Mammary epithelial cell (primary cell): ENCODE measurements at regions of chr10 and their contacts with region 1.

Region 1: DNA sequence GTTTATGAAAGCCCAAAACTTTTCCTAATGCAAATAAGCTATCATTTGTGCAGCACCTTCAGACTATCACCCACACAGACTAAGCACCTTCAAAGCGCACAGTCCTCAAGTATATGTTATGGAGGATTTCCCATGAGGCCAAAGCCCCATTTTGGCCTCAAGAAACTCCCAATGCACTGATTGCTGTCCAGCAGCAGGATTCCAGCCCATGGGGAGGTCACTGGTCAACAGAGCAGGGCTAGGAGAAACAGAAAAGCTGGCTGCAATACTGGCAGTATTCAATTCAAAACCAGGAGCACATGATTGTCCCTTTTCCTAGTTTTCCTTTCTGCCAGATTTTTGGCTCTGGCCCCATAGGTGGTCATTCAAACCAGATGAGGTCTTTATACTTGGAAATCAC is 24.5 kb upstream of the KIAA1217 start:
- DNase-seq: no peak
- H3K4me3 ChIP-seq: no peak overlapping the region
- H3K27ac ChIP-seq: no peak overlapping the region
- H3K4me1 ChIP-seq: no peaks in the 10 kb centered on the region
- H3K27me3 ChIP-seq: peaks cover 5% of the 10 kb centered on the region
- CTCF ChIP-seq: no peak

Region 2: DNA sequence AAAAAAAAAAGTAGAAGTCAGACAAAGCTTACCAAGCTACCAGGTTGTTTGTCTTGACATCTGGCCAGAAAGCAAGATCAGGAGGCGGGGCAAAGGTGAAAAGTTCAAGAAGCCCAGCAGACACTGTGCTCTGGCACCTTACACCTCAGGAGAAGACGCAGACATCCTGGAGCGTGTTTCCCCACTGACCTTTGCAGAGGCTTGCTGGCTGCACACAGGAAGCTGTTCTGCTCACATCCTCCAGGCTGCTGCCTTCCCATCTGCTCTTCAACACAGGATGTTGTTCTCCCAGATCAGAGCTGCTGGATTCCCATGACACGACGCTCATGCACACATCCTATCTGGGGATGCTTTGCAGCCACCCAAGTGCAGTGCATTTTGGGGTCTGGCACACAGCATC is 149.9 kb before region 1 on chr10:
- CTCF ChIA-PET with region 1: interaction called, 36 read pairs
- dilution Hi-C with region 1: no loop called
- in situ Hi-C with region 1: no loop called
- intact Hi-C with region 1: no loop called
- DNase-seq: no peak
- H3K4me3 ChIP-seq: no peak overlapping the region
- H3K27ac ChIP-seq: no peak overlapping the region
- H3K4me1 ChIP-seq: no peaks in the 10 kb centered on the region
- H3K27me3 ChIP-seq: peaks cover 5% of the 10 kb centered on the region
- CTCF ChIP-seq: no peak

Region 3: GRCh38 chr10:24047176-24047575 is 137.3 kb before region 1 on chr10:
- CTCF ChIA-PET with region 1: no interaction called
- dilution Hi-C with region 1: no loop called
- in situ Hi-C with region 1: no loop called
- intact Hi-C with region 1: no loop called
- DNase-seq: no peak
- H3K4me3 ChIP-seq: no peak overlapping the region
- H3K27ac ChIP-seq: no peak overlapping the region
- H3K4me1 ChIP-seq: no peaks in the 10 kb centered on the region
- H3K27me3 ChIP-seq: no peaks in the 10 kb centered on the region
- CTCF ChIP-seq: no peak

Region 4: GRCh38 chr10:24262931-24263590 is 78.6 kb after region 1 on chr10:
- CTCF ChIA-PET with region 1: no interaction called
- dilution Hi-C with region 1: no loop called
- in situ Hi-C with region 1: no loop called
- intact Hi-C with region 1: no loop called
- DNase-seq: no peak
- H3K4me3 ChIP-seq: no peak overlapping the region
- H3K27ac ChIP-seq: no peak overlapping the region
- H3K4me1 ChIP-seq: peaks cover 15% of the 10 kb centered on the region
- H3K27me3 ChIP-seq: no peaks in the 10 kb centered on the region
- CTCF ChIP-seq: no peak

Region 5: DNA sequence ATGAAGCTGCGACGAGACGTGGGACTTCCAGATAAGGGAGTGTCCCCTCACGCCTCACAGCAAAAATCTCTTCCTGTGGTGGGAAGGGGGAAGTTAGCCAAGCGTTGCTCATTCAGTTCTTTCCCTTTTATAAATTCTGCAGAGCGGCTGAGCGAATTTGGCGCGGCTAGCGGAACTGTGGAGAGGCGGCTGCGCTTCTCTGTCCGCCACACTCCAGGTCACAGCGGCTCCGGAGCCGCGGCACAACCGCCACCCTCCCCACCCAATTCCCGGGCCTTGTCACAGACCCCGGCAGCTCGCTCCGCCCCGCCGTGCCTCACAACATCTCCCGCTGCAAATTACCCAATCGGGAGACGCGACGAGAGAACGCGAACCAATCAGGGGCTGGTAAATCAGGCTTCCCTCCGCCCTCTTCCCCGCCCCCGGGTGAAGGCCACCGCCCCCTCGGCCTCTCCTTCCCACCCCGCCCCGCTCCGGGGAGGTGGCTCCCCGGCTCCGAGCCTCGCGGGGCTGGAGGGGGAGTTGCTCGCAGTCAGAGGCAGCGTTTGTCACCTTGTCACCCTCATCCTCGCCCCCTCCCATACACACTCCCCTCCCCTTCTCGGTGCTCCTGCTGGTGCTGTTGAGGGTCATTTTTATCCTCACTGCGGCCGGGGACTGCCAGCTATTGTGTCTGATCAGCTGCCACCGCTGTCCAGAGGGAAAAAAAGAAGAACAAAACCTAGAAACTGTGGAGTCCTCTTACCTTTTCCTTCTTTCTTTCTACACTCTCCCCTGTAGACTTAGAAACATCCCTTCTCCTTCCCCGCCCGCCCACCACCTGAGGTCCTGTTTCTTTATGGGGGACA is 540.1 kb after region 1 on chr10:
- CTCF ChIA-PET with region 1: no interaction called
- dilution Hi-C with region 1: no loop called
- in situ Hi-C with region 1: no loop called
- intact Hi-C with region 1: no loop called
- DNase-seq: peak; percentile 96
- H3K4me3 ChIP-seq: peak overlapping the region; percentile 66 to 82 (median 70)
- H3K27ac ChIP-seq: peak overlapping the region; percentile 86
- H3K4me1 ChIP-seq: peaks cover 5% of the 10 kb centered on the region
- H3K27me3 ChIP-seq: no peaks in the 10 kb centered on the region
- CTCF ChIP-seq: no peak